Activated CD8-positive, alpha-beta memory T cell treated with anti-CD3 and anti-CD28 coated beads, Interleukin-2, amount 10 ng/mL, durations not matched to agents 7 days and 5 days (primary cell): ENCODE measurements at regions of chr9 and their contacts with region 1.

Region 1: GRCh38 chr9:91177661-91178280 is 183.9 kb downstream of the AUH start:
- DNase-seq: peak; percentile 77
- ATAC-seq: peak; percentile 67
- H3K4me3 Mint-ChIP-seq: peak overlapping the region; percentile 23
- H3K27ac Mint-ChIP-seq: peak overlapping the region; percentile 91
- H3K4me1 Mint-ChIP-seq: peaks cover 63% of the 10 kb centered on the region
- H3K27me3 Mint-ChIP-seq: no peaks in the 10 kb centered on the region

Region 2: GRCh38 chr9:91193658-91194391 is 16.1 kb after region 1 on chr9:
- CTCF ChIA-PET with region 1: interaction called, 20 read pairs
- DNase-seq: peak; percentile 93
- ATAC-seq: peak; percentile 72
- H3K4me3 Mint-ChIP-seq: peak overlapping the region; percentile 69
- H3K27ac Mint-ChIP-seq: peak overlapping the region; percentile 98
- H3K4me1 Mint-ChIP-seq: peaks cover 71% of the 10 kb centered on the region
- H3K27me3 Mint-ChIP-seq: no peaks in the 10 kb centered on the region